Cardiac septum (tissue), 1 donor: ENCODE measurements at regions of chr3 and their contacts with region 1.

Region 1: GRCh38 chr3:76585794-76586392 is 454.0 kb upstream of the ROBO2 start:
- DNase-seq: no peak

Region 2: GRCh38 chr3:76369178-76369577 is 216.7 kb before region 1 on chr3:
- intact Hi-C with region 1: loop called (anchors 5 kb)
- DNase-seq: no peak